ENCODE measurements at regions of chr17 and their contacts with region 1.

Region 1: GRCh38 chr17:40287494-40288369 is at the start of gene CDC6:
- DNase-seq: peak; percentile 99
- H3K4me3 ChIP-seq: peak within 1 kb of the TSS; percentile 73 to 96 (median 74)
- H3K4me3 Mint-ChIP-seq: peak within 1 kb of the TSS; percentile 96 to 98
- H3K27ac ChIP-seq: no peak within 1 kb of the TSS
- H3K27ac Mint-ChIP-seq: peak within 1 kb of the TSS; percentile 48 to 95 (median 87)
- H3K4me1 ChIP-seq: peaks cover 12 to 15% of the 10 kb centered on the region in 2 donors
- H3K4me1 Mint-ChIP-seq: peaks cover 15% of the 10 kb centered on the region
- H3K27me3 ChIP-seq: no peaks in the 10 kb centered on the region
- H3K27me3 Mint-ChIP-seq: peaks cover 0 to 1% (median 0%) of the 10 kb centered on the region in 3 donors
- CTCF ChIP-seq: no peak
- polyA plus RNA-seq, gene CDC6: 0.11 to 0.21 TPM in 2 of 3 donors, not detected in the other

Region 2: GRCh38 chr17:40019140-40019991 is 268.4 kb before region 1 on chr17:
- intact Hi-C with region 1: loop called in 1 of 2 experiments (anchors 5 kb)
- DNase-seq: no peak
- H3K4me3 ChIP-seq: no peak overlapping the region
- H3K4me3 Mint-ChIP-seq: no peak overlapping the region
- H3K27ac ChIP-seq: no peak overlapping the region
- H3K27ac Mint-ChIP-seq: peak overlapping the region in 4 of 7 donors; percentile 30 to 64 (median 48)
- H3K4me1 ChIP-seq: no peaks in the 10 kb centered on the region
- H3K4me1 Mint-ChIP-seq: peaks cover 1% of the 10 kb centered on the region
- H3K27me3 ChIP-seq: no peaks in the 10 kb centered on the region
- H3K27me3 Mint-ChIP-seq: peaks cover 2 to 12% (median 3%) of the 10 kb centered on the region in 3 donors
- CTCF ChIP-seq: no peak

Region 3: DNA sequence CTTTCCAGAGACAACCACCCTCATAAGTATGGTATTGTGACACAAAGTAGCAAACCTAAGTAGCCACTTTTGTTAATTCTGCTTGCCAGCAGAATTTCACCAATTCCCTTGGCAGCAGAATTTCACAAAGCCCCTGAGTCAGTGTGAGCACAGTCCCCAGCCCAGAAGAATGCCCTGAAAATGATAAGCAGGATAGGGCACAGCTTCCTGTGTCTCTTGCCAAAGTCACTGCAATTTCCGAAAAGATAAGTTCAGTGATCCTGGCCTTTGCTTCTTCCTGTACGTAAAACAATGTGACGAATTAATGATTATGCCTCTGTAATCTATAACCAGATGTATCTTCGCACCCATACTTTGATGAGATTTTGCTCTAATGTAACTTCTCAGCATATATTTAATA is 84.6 kb before region 1 on chr17:
- intact Hi-C with region 1: loop called (anchors 5 kb)
- DNase-seq: no peak
- H3K4me3 ChIP-seq: no peak overlapping the region
- H3K4me3 Mint-ChIP-seq: no peak overlapping the region
- H3K27ac ChIP-seq: no peak overlapping the region
- H3K27ac Mint-ChIP-seq: no peak overlapping the region
- H3K4me1 ChIP-seq: peaks cover 3 to 11% of the 10 kb centered on the region in 2 donors
- H3K4me1 Mint-ChIP-seq: peaks cover 30% of the 10 kb centered on the region
- H3K27me3 ChIP-seq: no peaks in the 10 kb centered on the region
- H3K27me3 Mint-ChIP-seq: peaks cover 5 to 13% (median 9%) of the 10 kb centered on the region in 3 donors
- CTCF ChIP-seq: no peak

Region 4: DNA sequence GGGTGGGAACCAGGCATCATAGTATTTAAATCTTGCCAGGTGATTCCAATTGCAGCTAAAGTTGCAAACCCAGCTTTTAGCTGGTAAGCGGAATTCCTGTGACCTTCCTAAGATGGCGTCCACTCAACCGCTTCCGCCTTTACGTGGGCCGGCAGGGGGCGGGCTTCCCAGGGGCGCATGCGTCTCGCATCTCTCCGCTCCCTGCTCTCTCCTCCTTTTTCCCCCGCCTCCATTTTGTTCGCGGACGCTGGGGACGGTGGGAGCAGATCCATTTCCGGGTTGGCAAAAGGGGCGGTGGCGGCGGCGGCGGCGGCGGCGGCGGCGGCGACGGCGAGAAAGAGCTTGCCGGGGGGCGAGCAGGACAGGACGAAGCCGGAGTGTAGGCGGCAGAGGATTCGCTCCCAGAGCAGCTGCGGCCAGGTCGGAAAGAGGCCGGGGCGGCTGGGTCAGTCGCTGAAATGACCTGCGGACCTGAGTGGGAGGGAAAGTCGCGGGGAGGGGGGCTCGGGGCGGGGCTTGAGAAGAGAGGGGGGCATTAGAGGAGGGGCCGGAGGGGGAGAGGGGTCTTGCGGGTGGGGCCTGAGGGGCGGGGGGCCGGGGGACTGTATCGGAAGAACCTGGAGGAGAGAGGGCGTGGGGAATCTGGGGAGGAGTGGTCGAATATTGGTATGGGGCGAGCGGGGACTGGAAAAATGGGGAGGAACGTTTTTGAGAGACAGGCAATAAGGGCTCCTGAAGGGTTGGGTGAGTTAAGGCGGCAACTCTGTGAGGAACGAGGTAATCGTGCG is 68.5 kb before region 1 on chr17 and contains the start of gene WIPF2:
- intact Hi-C with region 1: loop called (anchors 5 kb)
- DNase-seq: peak; percentile 92 to 97 (median 96)
- H3K4me3 ChIP-seq: peak within 1 kb of the TSS; percentile 62 to 97 (median 94)
- H3K4me3 Mint-ChIP-seq: peak within 1 kb of the TSS; percentile 95 to 98
- H3K27ac ChIP-seq: peak within 1 kb of the TSS; percentile 41 to 99
- H3K27ac Mint-ChIP-seq: peak within 1 kb of the TSS; percentile 97 to 100 (median 99)
- H3K4me1 ChIP-seq: peaks cover 15 to 24% of the 10 kb centered on the region in 2 donors
- H3K4me1 Mint-ChIP-seq: peaks cover 32% of the 10 kb centered on the region
- H3K27me3 ChIP-seq: no peaks in the 10 kb centered on the region
- H3K27me3 Mint-ChIP-seq: no peaks in the 10 kb centered on the region
- CTCF ChIP-seq: peak; percentile 62
- polyA plus RNA-seq, gene WIPF2: 5.2 to 9.7 (median 8.4) TPM

Measured in CD14-positive monocyte (primary cell).